Ovary (tissue), 10 donors: ENCODE measurements at regions of chr18 and their contacts with region 1.

Region 1: GRCh38 chr18:13726232-13726971 is at the starts of genes FAM210A and RNMT:
- DNase-seq: peak; percentile 94 to 96 (median 95)
- H3K4me3 ChIP-seq: peak within 1 kb of the TSS; percentile 97
- H3K27ac ChIP-seq: peak within 1 kb of the TSS; percentile 84 to 89
- H3K4me1 ChIP-seq: peaks cover 5% of the 10 kb centered on the region
- H3K27me3 ChIP-seq: no peaks in the 10 kb centered on the region
- CTCF ChIP-seq: no peak
- EP300 ChIP-seq: peak; percentile 77
- POLR2A ChIP-seq: peak; percentile 67
- total RNA-seq, gene FAM210A: 8.4 to 15.2 (median 12.6) TPM
- total RNA-seq, gene RNMT: 16.7 to 38.3 (median 29.5) TPM

Region 2: GRCh38 chr18:12947355-12948041 is 778.9 kb before region 1 on chr18 and contains the start of gene SEH1L:
- intact Hi-C with region 1: loop called in 1 of 4 experiments (anchors 5 kb)
- DNase-seq: peak; percentile 98 to 100 (median 99)
- H3K4me3 ChIP-seq: peak within 1 kb of the TSS; percentile 79
- H3K27ac ChIP-seq: peak within 1 kb of the TSS; percentile 92 to 99
- H3K4me1 ChIP-seq: peaks cover 3% of the 10 kb centered on the region
- H3K27me3 ChIP-seq: no peaks in the 10 kb centered on the region
- CTCF ChIP-seq: no peak
- EP300 ChIP-seq: no peak
- POLR2A ChIP-seq: peak; percentile 54
- total RNA-seq, gene SEH1L: 17.3 to 56.1 (median 37.9) TPM

Region 3: GRCh38 chr18:13137670-13138419 is 588.6 kb before region 1 on chr18:
- intact Hi-C with region 1: loop called in 1 of 4 experiments (anchors 10 kb)
- DNase-seq: peak; percentile 63 to 77 (median 72)
- H3K4me3 ChIP-seq: peak overlapping the region; percentile 71
- H3K27ac ChIP-seq: peak overlapping the region; percentile 43 to 89
- H3K4me1 ChIP-seq: peaks cover 1% of the 10 kb centered on the region
- H3K27me3 ChIP-seq: no peaks in the 10 kb centered on the region
- CTCF ChIP-seq: no peak
- EP300 ChIP-seq: no peak
- POLR2A ChIP-seq: no peak

Region 4: GRCh38 chr18:13539050-13539449 is 187.4 kb before region 1 on chr18:
- intact Hi-C with region 1: no loop called
- DNase-seq: no peak
- H3K4me3 ChIP-seq: no peak overlapping the region
- H3K27ac ChIP-seq: no peak overlapping the region
- H3K4me1 ChIP-seq: peaks cover 16% of the 10 kb centered on the region
- H3K27me3 ChIP-seq: no peaks in the 10 kb centered on the region
- CTCF ChIP-seq: no peak
- EP300 ChIP-seq: no peak
- POLR2A ChIP-seq: no peak

Region 5: GRCh38 chr18:13660510-13660909 is 65.9 kb before region 1 on chr18:
- intact Hi-C with region 1: no loop called
- DNase-seq: no peak
- H3K4me3 ChIP-seq: no peak overlapping the region
- H3K27ac ChIP-seq: no peak overlapping the region
- H3K4me1 ChIP-seq: peaks cover 1% of the 10 kb centered on the region
- H3K27me3 ChIP-seq: no peaks in the 10 kb centered on the region
- CTCF ChIP-seq: no peak
- EP300 ChIP-seq: no peak
- POLR2A ChIP-seq: no peak